ENCODE measurements at regions of chr7 and their contacts with region 1.

Region 1: GRCh38 chr7:103317016-103317415 is 19.8 kb downstream of the PMPCB start:
- DNase-seq: no peak
- ATAC-seq: no peak
- H3K4me3 ChIP-seq: no peak overlapping the region
- H3K4me3 Mint-ChIP-seq: no peak overlapping the region
- H3K27ac ChIP-seq: no peak overlapping the region
- H3K27ac Mint-ChIP-seq: no peak overlapping the region
- H3K4me1 ChIP-seq: no peaks in the 10 kb centered on the region
- H3K4me1 Mint-ChIP-seq: no peaks in the 10 kb centered on the region
- H3K27me3 ChIP-seq: no peaks in the 10 kb centered on the region
- H3K27me3 Mint-ChIP-seq: no peaks in the 10 kb centered on the region
- CTCF ChIP-seq: no peak

Region 2: DNA sequence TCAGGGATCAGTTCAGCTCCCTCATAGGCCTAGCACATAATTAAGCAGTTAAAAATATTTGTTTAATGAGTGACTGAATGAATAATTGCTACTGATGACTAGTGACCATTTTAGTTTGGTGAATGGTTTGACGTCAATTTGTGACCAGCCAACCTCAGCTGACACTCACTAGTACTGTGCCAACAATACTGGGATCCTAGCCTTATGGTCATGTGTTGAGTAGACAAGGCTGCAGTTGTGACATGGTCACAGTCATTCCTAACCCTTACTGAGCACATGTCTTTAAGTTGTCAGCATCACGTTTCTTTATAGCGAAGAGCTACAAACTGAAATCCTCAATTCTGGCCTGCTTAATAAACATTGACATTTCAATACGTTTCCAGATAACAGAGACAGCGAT is 215.9 kb after region 1 on chr7:
- CTCF ChIA-PET with region 1: no interaction called
- POLR2A ChIA-PET with region 1: no interaction called
- intact Hi-C with region 1: no loop called
- DNase-seq: no peak
- ATAC-seq: no peak
- H3K4me3 ChIP-seq: no peak overlapping the region
- H3K4me3 Mint-ChIP-seq: no peak overlapping the region
- H3K27ac ChIP-seq: no peak overlapping the region
- H3K27ac Mint-ChIP-seq: no peak overlapping the region
- H3K4me1 ChIP-seq: no peaks in the 10 kb centered on the region
- H3K4me1 Mint-ChIP-seq: no peaks in the 10 kb centered on the region
- H3K27me3 ChIP-seq: peaks cover 0 to 8% of the 10 kb centered on the region in 2 experiments
- H3K27me3 Mint-ChIP-seq: peaks cover 33% of the 10 kb centered on the region
- CTCF ChIP-seq: no peak

Region 3: GRCh38 chr7:105094966-105095365 is 1778.0 kb after region 1 on chr7:
- CTCF ChIA-PET with region 1: no interaction called
- POLR2A ChIA-PET with region 1: no interaction called
- intact Hi-C with region 1: loop called in 1 of 2 experiments (anchors 5 kb)
- DNase-seq: no peak
- ATAC-seq: no peak
- H3K4me3 ChIP-seq: no peak overlapping the region
- H3K4me3 Mint-ChIP-seq: no peak overlapping the region
- H3K27ac ChIP-seq: peak overlapping the region in 1 of 2 donors; percentile 13
- H3K27ac Mint-ChIP-seq: peak overlapping the region; percentile 67
- H3K4me1 ChIP-seq: no peaks in the 10 kb centered on the region
- H3K4me1 Mint-ChIP-seq: peaks cover 32% of the 10 kb centered on the region
- H3K27me3 ChIP-seq: no peaks in the 10 kb centered on the region
- H3K27me3 Mint-ChIP-seq: no peaks in the 10 kb centered on the region
- CTCF ChIP-seq: no peak

Measured in CD4-positive, alpha-beta T cell (primary cell).